Calu3 (cell line): ENCODE measurements at regions of chr2 and their contacts with region 1.

Region 1: GRCh38 chr2:134568413-134568812 is 150.4 kb downstream of the TMEM163 start:
- DNase-seq: no peak
- H3K4me3 Mint-ChIP-seq: no peak overlapping the region
- H3K27ac Mint-ChIP-seq: no peak overlapping the region
- H3K4me1 Mint-ChIP-seq: no peaks in the 10 kb centered on the region
- H3K27me3 Mint-ChIP-seq: peaks cover 11% of the 10 kb centered on the region
- CTCF ChIP-seq: no peak

Region 2: GRCh38 chr2:134482131-134482723 is 86.2 kb before region 1 on chr2:
- CTCF ChIA-PET with region 1: interaction called, 10 read pairs
- intact Hi-C with region 1: no loop called
- DNase-seq: no peak
- H3K4me3 Mint-ChIP-seq: no peak overlapping the region
- H3K27ac Mint-ChIP-seq: no peak overlapping the region
- H3K4me1 Mint-ChIP-seq: no peaks in the 10 kb centered on the region
- H3K27me3 Mint-ChIP-seq: no peaks in the 10 kb centered on the region
- CTCF ChIP-seq: no peak

Region 3: DNA sequence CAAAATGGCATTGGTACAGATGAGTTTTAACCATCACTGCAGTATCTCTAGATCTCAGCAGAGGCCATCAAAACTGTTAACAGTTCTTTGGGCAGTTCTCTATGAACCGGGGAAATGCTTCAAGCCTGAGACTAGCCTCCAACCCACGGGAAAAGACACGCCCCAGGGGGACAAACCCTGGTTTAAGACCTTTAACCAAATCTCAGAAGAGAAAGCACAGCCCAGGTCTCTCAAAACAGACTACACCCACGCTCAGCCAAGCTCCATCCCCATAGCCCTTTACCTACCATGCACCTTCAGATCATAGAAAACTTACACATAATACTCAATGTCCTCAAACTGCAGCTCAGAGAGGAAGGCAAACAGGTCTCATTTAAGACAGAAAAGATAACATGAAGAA is 72.1 kb after region 1 on chr2:
- CTCF ChIA-PET with region 1: no interaction called
- intact Hi-C with region 1: no loop called
- DNase-seq: no peak
- H3K4me3 Mint-ChIP-seq: no peak overlapping the region
- H3K27ac Mint-ChIP-seq: no peak overlapping the region
- H3K4me1 Mint-ChIP-seq: no peaks in the 10 kb centered on the region
- H3K27me3 Mint-ChIP-seq: no peaks in the 10 kb centered on the region
- CTCF ChIP-seq: no peak

Region 4: DNA sequence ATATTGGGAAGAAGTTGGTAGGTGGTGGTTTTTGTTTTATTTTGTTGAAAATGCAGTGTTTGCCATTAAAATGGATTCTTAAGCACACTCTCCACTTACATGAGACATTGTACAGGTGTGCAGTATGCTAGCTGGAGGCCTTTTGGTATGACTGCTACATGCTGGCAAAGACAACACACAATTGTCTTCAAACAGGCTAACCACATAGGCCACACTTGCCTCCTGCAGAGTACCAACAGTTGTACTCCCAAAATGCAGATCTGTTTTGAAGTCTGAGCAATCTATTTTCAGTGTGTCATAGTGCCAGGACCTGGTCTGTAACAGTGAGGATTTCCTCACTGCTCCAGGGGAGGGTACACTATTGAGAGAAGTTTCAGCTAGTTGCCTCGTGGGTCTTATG is 749.0 kb after region 1 on chr2:
- CTCF ChIA-PET with region 1: no interaction called
- intact Hi-C with region 1: no loop called
- DNase-seq: no peak
- H3K4me3 Mint-ChIP-seq: no peak overlapping the region
- H3K27ac Mint-ChIP-seq: no peak overlapping the region
- H3K4me1 Mint-ChIP-seq: no peaks in the 10 kb centered on the region
- H3K27me3 Mint-ChIP-seq: no peaks in the 10 kb centered on the region
- CTCF ChIP-seq: no peak